ENCODE measurements at regions of chr20 and their contacts with region 1.

Region 1: GRCh38 chr20:24610341-24611115 is 141.1 kb downstream of the SYNDIG1 start:
- DNase-seq: peak; percentile 15
- H3K4me3 ChIP-seq: no peak overlapping the region
- H3K27ac ChIP-seq: no peak overlapping the region
- H3K4me1 ChIP-seq: peaks cover 2% of the 10 kb centered on the region
- H3K27me3 ChIP-seq: no peaks in the 10 kb centered on the region
- CTCF ChIP-seq: no peak

Region 2: DNA sequence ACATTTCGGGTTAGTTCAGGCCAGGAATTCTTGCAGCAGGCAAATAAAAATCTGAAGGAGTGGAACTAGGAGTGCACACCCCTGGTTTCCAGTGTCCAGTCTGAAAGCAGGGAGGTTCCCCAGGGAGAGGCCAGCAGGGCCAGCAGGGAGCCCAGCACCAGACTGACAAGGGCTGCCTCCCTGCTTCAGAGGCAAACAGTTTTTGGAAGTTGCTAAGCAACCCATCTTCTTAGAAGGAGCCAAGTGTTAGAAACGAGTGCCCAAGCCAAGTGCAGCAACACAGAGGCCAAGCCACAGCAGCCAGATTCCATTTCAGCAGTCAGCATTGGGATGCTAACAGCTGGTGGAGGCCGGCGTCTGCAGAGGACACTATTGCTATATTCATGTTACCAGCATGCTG is 38.0 kb after region 1 on chr20:
- dilution Hi-C with region 1: loop called (anchors 5 kb)
- DNase-seq: no peak
- H3K4me3 ChIP-seq: no peak overlapping the region
- H3K27ac ChIP-seq: no peak overlapping the region
- H3K4me1 ChIP-seq: no peaks in the 10 kb centered on the region
- H3K27me3 ChIP-seq: no peaks in the 10 kb centered on the region
- CTCF ChIP-seq: no peak